MCF 10A (cell line): ENCODE measurements at regions of chr4 and their contacts with region 1.

Region 1: DNA sequence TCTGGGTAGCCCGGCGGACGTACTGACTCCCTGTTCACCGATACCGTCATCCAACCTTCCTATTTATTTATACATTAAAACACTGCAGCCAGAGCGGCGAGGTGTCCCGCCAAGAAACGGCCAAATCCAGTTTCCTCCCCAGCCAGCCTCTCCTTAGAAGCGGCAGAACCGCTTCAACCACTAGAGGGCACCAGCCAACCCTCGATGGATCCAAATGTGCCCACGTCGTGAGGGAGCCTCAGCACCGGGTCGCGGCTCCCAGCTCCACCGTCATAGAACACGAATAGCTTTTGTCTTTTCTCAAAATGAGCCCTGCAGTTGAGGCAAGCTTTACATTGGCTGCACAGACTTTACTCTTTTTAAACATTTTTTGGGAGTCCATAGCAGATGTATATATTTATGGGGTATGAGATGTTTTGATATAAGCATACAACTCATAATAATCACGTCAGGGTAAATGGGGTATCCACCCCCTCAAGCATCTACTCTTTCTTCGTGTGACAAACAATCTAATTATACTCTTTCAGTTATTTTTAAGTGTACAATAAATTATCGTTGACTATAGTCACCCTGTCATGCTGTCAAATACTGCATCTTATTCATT is 13.0 kb upstream of the HELT start:
- DNase-seq: peak; percentile 88
- H3K4me3 Mint-ChIP-seq: peak overlapping the region; percentile 26
- H3K27ac Mint-ChIP-seq: no peak overlapping the region
- H3K4me1 Mint-ChIP-seq: peaks cover 8% of the 10 kb centered on the region
- H3K27me3 Mint-ChIP-seq: peaks cover 29% of the 10 kb centered on the region
- CTCF ChIP-seq: peak; percentile 93

Region 2: DNA sequence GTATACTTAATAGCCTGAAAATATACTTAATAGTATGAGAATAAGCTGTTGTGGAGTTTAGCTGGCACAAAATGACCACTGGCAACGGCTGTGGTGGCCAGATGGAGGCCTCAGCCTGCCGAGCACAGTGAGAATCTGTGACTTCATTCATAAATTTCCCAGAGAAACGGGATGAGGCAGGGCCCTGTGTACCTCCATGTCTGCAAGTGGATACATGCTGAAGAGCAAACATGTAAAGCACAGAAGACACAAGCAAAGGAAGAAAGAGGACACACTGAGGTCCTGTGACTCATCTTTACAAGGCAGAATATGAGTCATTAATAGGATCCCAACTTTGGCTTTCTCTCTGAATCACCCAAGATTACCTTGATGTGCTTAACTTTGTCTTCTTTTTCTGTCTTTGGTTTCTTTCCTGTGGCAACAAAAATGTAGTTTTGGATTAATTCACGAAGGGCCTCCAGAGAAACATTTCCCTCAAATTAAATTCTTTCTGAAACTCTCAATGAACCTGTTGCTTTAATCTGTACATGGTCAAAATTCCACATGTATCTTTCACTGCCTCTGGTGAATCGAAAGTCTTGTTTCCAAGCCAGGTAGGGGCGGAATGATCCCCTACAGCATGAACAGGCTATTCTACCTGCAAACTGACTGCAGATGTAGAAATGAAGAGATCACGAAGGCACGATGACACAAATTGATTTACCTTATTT is 587.4 kb before region 1 on chr4:
- CTCF ChIA-PET with region 1: no interaction called
- POLR2A ChIA-PET with region 1: no interaction called
- intact Hi-C with region 1: no loop called
- DNase-seq: peak; percentile 95
- H3K4me3 Mint-ChIP-seq: peak overlapping the region; percentile 47
- H3K27ac Mint-ChIP-seq: peak overlapping the region; percentile 47
- H3K4me1 Mint-ChIP-seq: peaks cover 24% of the 10 kb centered on the region
- H3K27me3 Mint-ChIP-seq: no peaks in the 10 kb centered on the region
- CTCF ChIP-seq: no peak

Region 3: GRCh38 chr4:184983672-184984356 is 21.5 kb before region 1 on chr4:
- CTCF ChIA-PET with region 1: interaction called, 11 read pairs
- POLR2A ChIA-PET with region 1: no interaction called
- intact Hi-C with region 1: no loop called
- DNase-seq: peak; percentile 70
- H3K4me3 Mint-ChIP-seq: no peak overlapping the region
- H3K27ac Mint-ChIP-seq: no peak overlapping the region
- H3K4me1 Mint-ChIP-seq: peaks cover 3% of the 10 kb centered on the region
- H3K27me3 Mint-ChIP-seq: no peaks in the 10 kb centered on the region
- CTCF ChIP-seq: peak; percentile 47

Region 4: GRCh38 chr4:185134307-185134869 is 129.1 kb after region 1 on chr4:
- CTCF ChIA-PET with region 1: interaction called, 4 read pairs
- POLR2A ChIA-PET with region 1: no interaction called
- intact Hi-C with region 1: loop called (anchors 1 kb)
- DNase-seq: peak; percentile 61
- H3K4me3 Mint-ChIP-seq: no peak overlapping the region
- H3K27ac Mint-ChIP-seq: no peak overlapping the region
- H3K4me1 Mint-ChIP-seq: no peaks in the 10 kb centered on the region
- H3K27me3 Mint-ChIP-seq: no peaks in the 10 kb centered on the region
- CTCF ChIP-seq: peak; percentile 64